T-cell (primary cell): ENCODE measurements at regions of chr21 and their contacts with region 1.

Region 1: GRCh38 chr21:20774737-20775136 is 223.5 kb upstream of the NCAM2 start:
- DNase-seq: no peak
- ATAC-seq: no peak
- H3K4me3 ChIP-seq: no peak overlapping the region
- H3K4me3 Mint-ChIP-seq: no peak overlapping the region
- H3K27ac ChIP-seq: no peak overlapping the region
- H3K27ac Mint-ChIP-seq: no peak overlapping the region
- H3K4me1 ChIP-seq: no peaks in the 10 kb centered on the region
- H3K4me1 Mint-ChIP-seq: no peaks in the 10 kb centered on the region
- H3K27me3 ChIP-seq: no peaks in the 10 kb centered on the region
- H3K27me3 Mint-ChIP-seq: no peaks in the 10 kb centered on the region

Region 2: DNA sequence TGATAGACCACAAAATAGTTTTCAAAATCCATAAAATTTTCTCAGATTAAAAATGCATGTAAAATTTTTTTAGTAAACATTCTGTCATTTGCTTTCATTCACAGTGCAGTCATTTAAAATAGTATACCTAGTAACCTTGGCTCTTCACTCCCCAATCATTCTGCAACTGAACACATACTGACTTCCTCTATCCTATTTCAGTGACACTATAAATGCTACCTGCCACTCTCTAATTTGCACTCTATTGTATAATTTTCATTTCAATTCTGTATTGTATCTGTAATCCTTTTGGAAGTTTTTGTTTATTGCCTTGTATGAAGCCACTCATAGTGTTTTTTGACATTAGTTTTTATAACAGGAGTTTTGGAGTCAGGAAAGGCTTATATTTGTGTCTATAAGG is 805.6 kb before region 1 on chr21:
- CTCF ChIA-PET with region 1: interaction called in 1 of 2 experiments, 10 read pairs
- POLR2A ChIA-PET with region 1: no interaction called
- DNase-seq: no peak
- ATAC-seq: no peak
- H3K4me3 ChIP-seq: no peak overlapping the region
- H3K4me3 Mint-ChIP-seq: no peak overlapping the region
- H3K27ac ChIP-seq: no peak overlapping the region
- H3K27ac Mint-ChIP-seq: no peak overlapping the region
- H3K4me1 ChIP-seq: no peaks in the 10 kb centered on the region
- H3K4me1 Mint-ChIP-seq: no peaks in the 10 kb centered on the region
- H3K27me3 ChIP-seq: no peaks in the 10 kb centered on the region
- H3K27me3 Mint-ChIP-seq: no peaks in the 10 kb centered on the region